ENCODE measurements at regions of chr19 and their contacts with region 1.

Region 1: GRCh38 chr19:5622463-5623396 is at the starts of genes SAFB and SAFB2:
- DNase-seq: peak; percentile 98 to 100 (median 100)
- ATAC-seq: peak; percentile 79
- H3K4me3 ChIP-seq: peak within 1 kb of the TSS; percentile 85
- H3K4me3 Mint-ChIP-seq: peak within 1 kb of the TSS; percentile 99
- H3K27ac ChIP-seq: peak within 1 kb of the TSS; percentile 90 to 95
- H3K27ac Mint-ChIP-seq: peak within 1 kb of the TSS; percentile 98
- H3K4me1 ChIP-seq: peaks cover 79% of the 10 kb centered on the region
- H3K4me1 Mint-ChIP-seq: peaks cover 84% of the 10 kb centered on the region
- H3K27me3 ChIP-seq: no peaks in the 10 kb centered on the region
- H3K27me3 Mint-ChIP-seq: no peaks in the 10 kb centered on the region
- CTCF ChIP-seq: no peak
- total RNA-seq, gene SAFB: 195 to 200 TPM
- total RNA-seq, gene SAFB2: 238 to 246 TPM

Region 2: DNA sequence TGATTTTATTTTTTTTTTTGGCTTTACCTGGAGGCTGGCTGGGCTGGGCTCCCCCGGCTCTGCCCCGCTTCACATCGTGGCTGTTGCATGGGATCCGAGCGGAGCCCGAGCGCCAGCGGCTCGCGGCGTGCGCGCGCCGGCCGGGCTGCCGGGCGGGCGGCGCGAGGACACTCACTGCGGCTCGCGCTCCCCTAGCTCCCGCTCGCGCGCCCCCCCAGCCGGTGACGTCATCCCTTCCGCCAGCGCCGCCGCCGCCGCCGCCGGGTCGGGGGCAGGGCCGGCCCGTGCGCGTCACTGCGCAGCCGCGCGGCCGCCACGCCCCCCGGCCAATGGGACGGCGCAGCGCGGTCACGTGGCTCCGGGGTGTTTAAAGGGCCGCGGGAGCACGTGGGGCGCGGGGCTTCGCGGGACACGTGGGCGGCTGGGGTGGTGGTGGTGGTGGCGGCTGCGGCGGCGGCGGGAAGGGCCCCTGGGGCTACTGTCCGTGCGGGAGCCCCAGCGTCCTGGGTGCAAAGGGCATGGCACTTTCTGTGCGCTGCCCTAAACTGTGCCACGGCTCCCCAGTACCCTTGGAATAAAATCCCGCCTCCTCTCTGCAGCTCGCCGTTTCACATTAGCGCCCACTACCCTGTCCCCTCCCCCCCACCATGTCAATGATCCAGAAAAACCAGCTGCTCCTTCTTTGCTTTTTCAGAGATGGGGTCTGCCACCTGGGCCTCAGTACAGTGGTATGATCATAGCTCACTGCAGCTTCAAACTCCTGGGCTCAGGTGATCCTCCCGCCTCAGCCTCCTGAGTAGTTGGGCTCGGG is 281.9 kb before region 1 on chr19 and contains the start of gene PTPRS:
- CTCF ChIA-PET with region 1: no interaction called
- POLR2A ChIA-PET with region 1: no interaction called
- intact Hi-C with region 1: no loop called
- DNase-seq: peak; percentile 32 to 78 (median 46)
- ATAC-seq: peak; percentile 72
- H3K4me3 ChIP-seq: peak within 1 kb of the TSS; percentile 44
- H3K4me3 Mint-ChIP-seq: peak within 1 kb of the TSS; percentile 76
- H3K27ac ChIP-seq: no peak within 1 kb of the TSS
- H3K27ac Mint-ChIP-seq: no peak within 1 kb of the TSS
- H3K4me1 ChIP-seq: peaks cover 21% of the 10 kb centered on the region
- H3K4me1 Mint-ChIP-seq: peaks cover 18% of the 10 kb centered on the region
- H3K27me3 ChIP-seq: peaks cover 45 to 54% of the 10 kb centered on the region in 2 experiments
- H3K27me3 Mint-ChIP-seq: peaks cover 61% of the 10 kb centered on the region
- CTCF ChIP-seq: no peak
- total RNA-seq, gene PTPRS: 5.3 to 6.3 TPM

Region 3: GRCh38 chr19:5561559-5561958 is 61.2 kb before region 1 on chr19:
- CTCF ChIA-PET with region 1: no interaction called
- POLR2A ChIA-PET with region 1: no interaction called
- intact Hi-C with region 1: no loop called
- DNase-seq: no peak
- ATAC-seq: no peak
- H3K4me3 ChIP-seq: no peak overlapping the region
- H3K4me3 Mint-ChIP-seq: no peak overlapping the region
- H3K27ac ChIP-seq: no peak overlapping the region
- H3K27ac Mint-ChIP-seq: no peak overlapping the region
- H3K4me1 ChIP-seq: no peaks in the 10 kb centered on the region
- H3K4me1 Mint-ChIP-seq: no peaks in the 10 kb centered on the region
- H3K27me3 ChIP-seq: peaks cover 12 to 18% of the 10 kb centered on the region in 2 experiments
- H3K27me3 Mint-ChIP-seq: peaks cover 46% of the 10 kb centered on the region
- CTCF ChIP-seq: peak; percentile 14

Region 4: GRCh38 chr19:5680437-5681368 is 58.0 kb after region 1 on chr19 and contains the starts of genes HSD11B1L and MICOS13:
- CTCF ChIA-PET with region 1: no interaction called
- POLR2A ChIA-PET with region 1: interaction called, 21 read pairs
- intact Hi-C with region 1: loop called (anchors 2 kb)
- DNase-seq: peak; percentile 96 to 100 (median 98)
- ATAC-seq: peak; percentile 95
- H3K4me3 ChIP-seq: peak within 1 kb of the TSS; percentile 100
- H3K4me3 Mint-ChIP-seq: peak within 1 kb of the TSS; percentile 99
- H3K27ac ChIP-seq: peak within 1 kb of the TSS; percentile 89 to 100
- H3K27ac Mint-ChIP-seq: peak within 1 kb of the TSS; percentile 95
- H3K4me1 ChIP-seq: peaks cover 24% of the 10 kb centered on the region
- H3K4me1 Mint-ChIP-seq: peaks cover 30% of the 10 kb centered on the region
- H3K27me3 ChIP-seq: no peaks in the 10 kb centered on the region
- H3K27me3 Mint-ChIP-seq: no peaks in the 10 kb centered on the region
- CTCF ChIP-seq: no peak
- total RNA-seq, gene HSD11B1L: 2.4 to 2.9 TPM
- total RNA-seq, gene MICOS13: 21.7 to 23.0 TPM

Region 5: GRCh38 chr19:5690125-5690954 is 67.6 kb after region 1 on chr19 and contains the start of gene RPL36:
- CTCF ChIA-PET with region 1: interaction called, 7 read pairs
- POLR2A ChIA-PET with region 1: interaction called, 51 read pairs
- intact Hi-C with region 1: no loop called
- DNase-seq: peak; percentile 95 to 100 (median 99)
- ATAC-seq: peak; percentile 65
- H3K4me3 ChIP-seq: peak within 1 kb of the TSS; percentile 100
- H3K4me3 Mint-ChIP-seq: peak within 1 kb of the TSS; percentile 96
- H3K27ac ChIP-seq: peak within 1 kb of the TSS; percentile 91 to 95
- H3K27ac Mint-ChIP-seq: peak within 1 kb of the TSS; percentile 96
- H3K4me1 ChIP-seq: peaks cover 54% of the 10 kb centered on the region
- H3K4me1 Mint-ChIP-seq: peaks cover 43% of the 10 kb centered on the region
- H3K27me3 ChIP-seq: no peaks in the 10 kb centered on the region
- H3K27me3 Mint-ChIP-seq: no peaks in the 10 kb centered on the region
- CTCF ChIP-seq: peak; percentile 98
- total RNA-seq, gene RPL36: 1,509 to 1,565 TPM

Region 6: GRCh38 chr19:5719961-5720790 is 97.4 kb after region 1 on chr19 and contains the starts of genes CATSPERD and LONP1:
- CTCF ChIA-PET with region 1: interaction called, 7 read pairs
- POLR2A ChIA-PET with region 1: interaction called, 37 read pairs
- intact Hi-C with region 1: loop called in 1 of 2 experiments (anchors 1 kb)
- DNase-seq: peak; percentile 95 to 100 (median 98)
- ATAC-seq: peak; percentile 86
- H3K4me3 ChIP-seq: peak within 1 kb of the TSS; percentile 69
- H3K4me3 Mint-ChIP-seq: peak within 1 kb of the TSS; percentile 94
- H3K27ac ChIP-seq: peak within 1 kb of the TSS; percentile 82 to 88
- H3K27ac Mint-ChIP-seq: peak within 1 kb of the TSS; percentile 96
- H3K4me1 ChIP-seq: peaks cover 34% of the 10 kb centered on the region
- H3K4me1 Mint-ChIP-seq: peaks cover 26% of the 10 kb centered on the region
- H3K27me3 ChIP-seq: no peaks in the 10 kb centered on the region
- H3K27me3 Mint-ChIP-seq: no peaks in the 10 kb centered on the region
- CTCF ChIP-seq: peak; percentile 83
- total RNA-seq, gene CATSPERD: not detected
- total RNA-seq, gene LONP1: 88.7 to 91.0 TPM

Region 7: DNA sequence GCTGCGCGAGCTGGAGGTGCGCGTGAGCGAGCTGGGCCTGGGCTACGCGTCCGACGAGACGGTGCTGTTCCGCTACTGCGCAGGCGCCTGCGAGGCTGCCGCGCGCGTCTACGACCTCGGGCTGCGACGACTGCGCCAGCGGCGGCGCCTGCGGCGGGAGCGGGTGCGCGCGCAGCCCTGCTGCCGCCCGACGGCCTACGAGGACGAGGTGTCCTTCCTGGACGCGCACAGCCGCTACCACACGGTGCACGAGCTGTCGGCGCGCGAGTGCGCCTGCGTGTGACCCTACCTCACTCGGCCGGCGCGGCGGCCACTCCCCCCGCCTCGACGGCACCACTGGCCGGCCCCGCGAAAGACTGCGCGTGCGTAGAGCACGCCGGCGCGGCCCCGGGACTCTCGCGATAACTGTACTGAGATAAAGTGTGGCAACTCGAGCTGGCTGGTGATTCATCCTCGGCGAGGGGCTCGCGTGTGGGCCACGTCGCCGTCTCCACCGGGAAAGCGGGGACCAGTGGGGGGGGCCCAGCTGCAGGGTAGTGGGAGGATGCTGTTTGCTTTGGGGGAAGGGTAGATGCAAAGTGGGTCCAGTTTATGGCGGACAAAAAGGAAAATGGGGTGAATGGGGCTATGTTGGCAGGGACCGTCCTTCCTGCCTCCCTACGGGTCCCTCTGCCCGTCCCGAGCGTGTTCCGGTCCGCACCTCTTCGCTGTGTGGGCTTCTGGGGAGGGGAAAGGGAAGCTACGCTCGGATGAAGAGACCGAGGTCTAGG is 205.3 kb after region 1 on chr19:
- CTCF ChIA-PET with region 1: no interaction called
- POLR2A ChIA-PET with region 1: interaction called, 14 read pairs
- intact Hi-C with region 1: no loop called
- DNase-seq: peak; percentile 85 to 98 (median 92)
- ATAC-seq: peak; percentile 81
- H3K4me3 ChIP-seq: peak overlapping the region; percentile 86
- H3K4me3 Mint-ChIP-seq: peak overlapping the region; percentile 98
- H3K27ac ChIP-seq: peak overlapping the region; percentile 69 to 86
- H3K27ac Mint-ChIP-seq: peak overlapping the region; percentile 95
- H3K4me1 ChIP-seq: peaks cover 31% of the 10 kb centered on the region
- H3K4me1 Mint-ChIP-seq: peaks cover 18% of the 10 kb centered on the region
- H3K27me3 ChIP-seq: peaks cover 0 to 3% of the 10 kb centered on the region in 2 experiments
- H3K27me3 Mint-ChIP-seq: no peaks in the 10 kb centered on the region
- CTCF ChIP-seq: no peak

Measured in CD4-positive, alpha-beta T cell (primary cell).